Activated CD8-positive, alpha-beta T cell treated with anti-CD3 and anti-CD28 coated beads, Interleukin-2, amount 10 ng/mL, durations not matched to agents 7 days and 5 days (primary cell): ENCODE measurements at regions of chr13 and their contacts with region 1.

Region 1: DNA sequence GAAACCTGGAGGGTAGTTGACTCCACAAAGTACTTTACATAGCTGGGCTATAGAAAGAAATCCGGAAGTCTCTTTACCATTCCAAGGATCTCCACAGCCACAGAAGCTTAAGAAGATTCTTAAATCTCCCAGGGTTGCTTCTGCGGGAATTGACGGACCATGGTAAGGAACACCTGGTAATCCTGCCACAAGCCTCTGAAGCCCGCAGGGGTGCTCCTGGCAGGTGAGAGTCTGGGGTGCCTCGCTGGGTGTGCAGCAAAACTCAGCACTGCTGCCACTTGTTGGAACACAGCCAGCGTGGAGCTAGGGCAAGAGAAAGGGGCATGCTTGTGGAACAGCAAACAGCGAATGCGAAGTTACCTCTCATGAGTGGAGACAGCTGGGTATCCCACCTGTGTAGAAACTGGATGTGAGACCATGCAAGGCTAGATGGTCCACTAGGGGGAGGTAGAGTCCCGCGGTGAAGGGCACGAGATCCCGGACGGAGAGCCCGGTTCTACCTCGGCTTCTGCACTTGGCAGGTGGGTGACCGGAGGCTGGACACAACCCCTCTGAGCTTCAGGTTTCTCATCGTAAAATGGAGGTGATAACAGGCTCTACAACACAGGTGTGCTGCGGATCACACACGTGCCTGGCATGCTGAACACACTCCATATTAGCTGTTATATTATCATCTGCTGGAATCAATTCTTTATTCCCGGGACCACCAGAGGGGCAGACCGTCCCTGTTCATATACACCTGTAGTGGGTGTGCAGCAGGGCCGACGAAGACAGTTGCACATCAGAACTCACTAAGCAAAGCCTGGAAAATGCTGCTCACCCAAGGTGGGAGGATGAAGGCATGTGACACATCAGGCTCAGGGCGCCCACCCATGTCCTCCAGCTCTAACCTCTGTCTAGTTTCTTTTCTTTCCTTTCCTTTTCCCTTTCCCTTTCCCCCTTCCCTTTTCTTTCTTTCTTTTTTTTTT is 24.1 kb upstream of the UBAC2 start:
- DNase-seq: peak; percentile 88
- ATAC-seq: peak; percentile 93
- H3K4me3 Mint-ChIP-seq: peak overlapping the region; percentile 35
- H3K27ac Mint-ChIP-seq: peak overlapping the region; percentile 28
- H3K4me1 Mint-ChIP-seq: peaks cover 38% of the 10 kb centered on the region
- H3K27me3 Mint-ChIP-seq: peaks cover 5% of the 10 kb centered on the region

Region 2: GRCh38 chr13:98842864-98843481 is 333.6 kb before region 1 on chr13:
- CTCF ChIA-PET with region 1: no interaction called
- POLR2A ChIA-PET with region 1: no interaction called
- DNase-seq: peak; percentile 69
- ATAC-seq: peak; percentile 77
- H3K4me3 Mint-ChIP-seq: no peak overlapping the region
- H3K27ac Mint-ChIP-seq: no peak overlapping the region
- H3K4me1 Mint-ChIP-seq: no peaks in the 10 kb centered on the region
- H3K27me3 Mint-ChIP-seq: no peaks in the 10 kb centered on the region

Region 3: DNA sequence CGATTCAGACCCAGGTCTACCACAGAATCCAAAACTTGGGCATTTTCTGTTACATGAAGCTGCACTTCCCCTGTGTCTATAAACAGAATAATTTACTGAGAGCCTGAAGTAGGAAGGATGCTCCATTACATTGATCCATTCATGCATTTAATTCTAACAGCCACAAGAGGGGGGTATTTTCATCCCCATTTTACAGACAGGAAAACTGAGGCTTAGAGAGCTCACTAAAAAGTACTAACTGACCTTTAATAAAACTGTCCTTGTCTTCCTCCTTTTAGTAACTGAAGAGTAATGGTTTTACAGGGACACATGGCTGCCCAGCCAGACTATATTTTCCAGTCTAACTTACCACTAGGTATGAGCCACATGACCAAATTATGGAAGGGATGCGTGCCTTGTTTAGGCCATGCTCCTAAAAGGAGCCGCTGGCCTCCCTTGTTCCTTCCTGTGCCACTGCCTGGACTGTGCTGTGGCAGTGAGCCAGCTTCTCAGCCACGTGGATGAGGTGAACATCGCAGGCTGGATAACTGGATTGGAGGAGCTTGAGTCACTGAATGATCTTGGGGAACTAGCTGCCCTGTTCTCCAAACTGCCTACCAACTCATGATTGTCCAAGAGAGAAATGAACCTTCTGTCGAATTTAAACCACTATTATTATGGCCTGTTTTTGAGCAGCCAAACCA is 307.0 kb before region 1 on chr13:
- CTCF ChIA-PET with region 1: interaction called, 13 read pairs
- POLR2A ChIA-PET with region 1: no interaction called
- DNase-seq: no peak
- ATAC-seq: no peak
- H3K4me3 Mint-ChIP-seq: no peak overlapping the region
- H3K27ac Mint-ChIP-seq: no peak overlapping the region
- H3K4me1 Mint-ChIP-seq: peaks cover 8% of the 10 kb centered on the region
- H3K27me3 Mint-ChIP-seq: no peaks in the 10 kb centered on the region

Region 4: GRCh38 chr13:98959786-98960605 is 216.6 kb before region 1 on chr13:
- CTCF ChIA-PET with region 1: no interaction called
- POLR2A ChIA-PET with region 1: no interaction called
- DNase-seq: no peak
- ATAC-seq: no peak
- H3K4me3 Mint-ChIP-seq: no peak overlapping the region
- H3K27ac Mint-ChIP-seq: no peak overlapping the region
- H3K4me1 Mint-ChIP-seq: peaks cover 8% of the 10 kb centered on the region
- H3K27me3 Mint-ChIP-seq: no peaks in the 10 kb centered on the region

Region 5: DNA sequence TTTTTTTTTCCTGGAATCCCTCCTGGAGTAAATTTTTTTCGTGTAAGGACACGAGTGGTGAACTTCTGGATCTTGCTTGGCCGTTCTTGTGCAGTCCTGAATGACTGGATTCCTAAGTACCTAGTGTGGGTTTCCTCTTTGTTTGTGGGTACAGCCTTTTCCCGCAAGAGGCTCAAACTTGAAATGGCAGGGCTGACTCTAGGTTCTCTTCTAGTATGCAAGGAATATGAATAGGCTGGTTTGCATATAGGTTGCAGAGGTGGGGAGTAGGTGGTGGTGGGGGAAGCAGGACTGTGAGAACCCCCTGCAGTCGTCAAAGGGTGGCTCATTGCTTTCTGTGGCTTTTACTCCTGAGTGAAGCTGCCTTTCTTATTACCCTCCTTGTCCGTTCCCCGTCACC is 37.6 kb after region 1 on chr13:
- CTCF ChIA-PET with region 1: interaction called, 12 read pairs
- POLR2A ChIA-PET with region 1: no interaction called
- DNase-seq: peak; percentile 52
- ATAC-seq: peak; percentile 20
- H3K4me3 Mint-ChIP-seq: peak overlapping the region; percentile 76
- H3K27ac Mint-ChIP-seq: peak overlapping the region; percentile 93
- H3K4me1 Mint-ChIP-seq: peaks cover 73% of the 10 kb centered on the region
- H3K27me3 Mint-ChIP-seq: no peaks in the 10 kb centered on the region

Region 6: DNA sequence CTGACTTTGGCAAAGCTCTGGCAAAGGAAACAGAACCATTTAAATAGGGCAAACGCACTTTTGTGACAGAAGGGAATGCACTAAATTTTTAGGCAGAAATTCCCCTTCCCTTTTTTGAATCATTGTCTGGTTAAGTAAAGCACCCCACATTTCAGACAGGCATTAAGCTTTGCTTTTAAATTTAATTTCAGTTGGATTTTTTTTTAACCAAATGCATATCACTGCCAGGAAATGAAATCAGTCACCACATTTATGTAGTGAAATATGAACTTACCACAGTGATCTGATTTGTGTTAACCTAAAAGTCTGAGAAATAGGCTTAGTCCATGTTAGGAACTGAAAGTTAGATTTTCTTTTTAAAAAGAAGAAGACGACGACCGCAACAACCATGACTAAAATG is 119.8 kb after region 1 on chr13:
- CTCF ChIA-PET with region 1: interaction called, 13 read pairs
- POLR2A ChIA-PET with region 1: no interaction called
- DNase-seq: no peak
- ATAC-seq: peak; percentile 73
- H3K4me3 Mint-ChIP-seq: peak overlapping the region; percentile 77
- H3K27ac Mint-ChIP-seq: peak overlapping the region; percentile 97
- H3K4me1 Mint-ChIP-seq: peaks cover 65% of the 10 kb centered on the region
- H3K27me3 Mint-ChIP-seq: no peaks in the 10 kb centered on the region

Region 7: GRCh38 chr13:99380921-99381645 is 204.5 kb after region 1 on chr13:
- CTCF ChIA-PET with region 1: interaction called, 18 read pairs
- POLR2A ChIA-PET with region 1: no interaction called
- DNase-seq: peak; percentile 78
- ATAC-seq: peak; percentile 50
- H3K4me3 Mint-ChIP-seq: peak overlapping the region; percentile 43
- H3K27ac Mint-ChIP-seq: peak overlapping the region; percentile 93
- H3K4me1 Mint-ChIP-seq: peaks cover 92% of the 10 kb centered on the region
- H3K27me3 Mint-ChIP-seq: no peaks in the 10 kb centered on the region

Region 8: DNA sequence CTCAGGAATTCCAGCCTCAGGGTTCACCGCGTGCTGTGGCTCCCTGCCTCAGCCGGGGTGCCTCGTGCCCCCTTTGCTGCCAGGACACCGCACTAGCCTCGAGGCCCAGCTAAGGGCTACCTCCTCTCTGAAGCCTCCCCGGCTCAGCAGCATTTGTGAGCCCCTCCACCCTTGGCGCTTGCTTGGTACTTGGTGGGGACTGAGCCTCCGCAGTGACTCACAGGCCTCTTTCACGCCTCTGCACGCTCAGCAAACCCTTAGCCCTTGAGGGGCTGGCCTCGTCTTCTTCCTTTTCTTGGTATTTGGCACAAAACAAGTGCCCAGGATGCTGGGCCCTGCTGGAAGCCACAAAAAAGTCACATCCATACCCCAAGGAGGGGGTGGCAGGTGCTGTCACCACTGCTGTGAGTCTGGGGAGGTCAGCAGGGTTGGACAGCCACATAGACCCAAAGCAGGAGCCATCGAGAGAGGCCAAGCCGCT is 239.3 kb after region 1 on chr13:
- CTCF ChIA-PET with region 1: no interaction called
- POLR2A ChIA-PET with region 1: no interaction called
- DNase-seq: peak; percentile 64
- ATAC-seq: peak; percentile 28
- H3K4me3 Mint-ChIP-seq: peak overlapping the region; percentile 26
- H3K27ac Mint-ChIP-seq: peak overlapping the region; percentile 76
- H3K4me1 Mint-ChIP-seq: peaks cover 24% of the 10 kb centered on the region
- H3K27me3 Mint-ChIP-seq: no peaks in the 10 kb centered on the region

Region 9: DNA sequence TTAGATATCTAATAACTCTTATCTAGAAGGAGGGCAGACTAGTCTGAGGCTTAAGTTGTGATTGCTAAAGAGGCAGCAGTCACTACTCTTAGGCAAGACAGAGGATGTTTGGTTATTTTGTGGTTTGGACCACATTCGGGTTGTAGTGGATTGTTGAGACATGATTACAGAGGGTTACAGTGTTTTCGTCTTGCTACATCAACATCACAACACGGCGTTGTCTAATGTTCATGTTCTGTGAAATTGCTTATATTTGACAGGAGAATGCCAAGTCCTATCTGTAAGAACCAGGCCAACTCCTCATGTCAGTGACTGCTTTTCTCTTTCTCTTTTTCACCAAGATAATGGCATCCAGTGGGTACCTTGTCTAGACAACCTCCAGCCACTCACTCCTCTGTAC is 307.9 kb after region 1 on chr13:
- CTCF ChIA-PET with region 1: no interaction called
- POLR2A ChIA-PET with region 1: no interaction called
- DNase-seq: peak; percentile 63
- ATAC-seq: peak; percentile 95
- H3K4me3 Mint-ChIP-seq: peak overlapping the region; percentile 32
- H3K27ac Mint-ChIP-seq: peak overlapping the region; percentile 10
- H3K4me1 Mint-ChIP-seq: peaks cover 40% of the 10 kb centered on the region
- H3K27me3 Mint-ChIP-seq: no peaks in the 10 kb centered on the region